Activated CD4-positive, alpha-beta T cell treated with anti-CD3 and anti-CD28 coated beads, Interleukin-2, amount 10 ng/mL, durations not matched to agents 7 days and 5 days (primary cell): ENCODE measurements at regions of chr22 and their contacts with region 1.

Region 1: GRCh38 chr22:50498322-50498890 is 9.1 kb downstream of the LMF2 start:
- DNase-seq: peak; percentile 78
- H3K4me3 Mint-ChIP-seq: no peak overlapping the region
- H3K27ac Mint-ChIP-seq: peak overlapping the region; percentile 17
- H3K4me1 Mint-ChIP-seq: peaks cover 11% of the 10 kb centered on the region
- H3K27me3 Mint-ChIP-seq: peaks cover 12% of the 10 kb centered on the region

Region 2: DNA sequence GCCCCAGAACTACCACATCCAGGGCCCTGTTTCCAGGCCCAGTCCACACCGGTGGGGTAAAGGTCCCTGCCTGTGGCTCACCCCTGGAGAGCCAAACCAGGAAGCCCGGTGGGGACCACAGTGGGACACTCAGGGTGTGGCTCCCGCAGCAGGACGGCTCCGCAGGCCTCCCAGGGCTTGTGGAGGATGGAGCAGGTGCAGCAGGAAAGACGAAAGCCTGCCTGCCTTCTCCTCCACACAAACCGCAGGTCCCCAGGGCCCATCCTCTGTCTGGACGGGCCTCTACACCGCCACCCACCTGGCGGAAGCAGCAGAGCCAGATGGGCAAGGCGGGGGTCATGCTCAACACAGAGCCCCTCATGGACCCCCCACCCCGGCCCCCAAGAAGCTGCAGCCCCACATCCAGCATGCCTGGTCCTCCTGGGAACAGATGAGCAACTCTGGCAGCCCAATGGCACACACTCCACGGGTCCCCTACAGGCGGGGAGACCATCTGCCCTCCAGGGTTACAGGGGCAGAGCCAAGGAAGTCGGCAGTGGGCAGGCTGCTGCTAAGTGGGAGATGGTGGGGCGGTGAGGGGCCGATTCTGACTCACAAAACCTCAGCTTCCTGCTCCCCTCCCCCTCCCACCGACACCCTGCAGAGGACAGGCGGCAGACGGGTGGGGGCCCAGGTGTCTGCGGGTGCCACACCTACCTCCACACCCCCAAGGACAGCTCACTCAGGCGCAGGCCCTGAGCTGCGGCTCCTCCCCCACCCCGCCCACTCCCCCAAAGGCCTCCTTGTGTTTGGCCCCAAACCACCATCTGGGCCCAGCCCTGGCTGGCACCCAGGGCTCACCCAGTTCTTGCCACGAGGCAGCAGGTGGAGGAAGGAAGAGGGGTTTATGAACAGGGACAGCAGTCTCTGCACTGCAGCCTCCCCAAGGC is 28.8 kb before region 1 on chr22:
- CTCF ChIA-PET with region 1: interaction called, 13 read pairs
- POLR2A ChIA-PET with region 1: no interaction called
- DNase-seq: peak; percentile 98
- H3K4me3 Mint-ChIP-seq: peak overlapping the region; percentile 67
- H3K27ac Mint-ChIP-seq: peak overlapping the region; percentile 97
- H3K4me1 Mint-ChIP-seq: peaks cover 71% of the 10 kb centered on the region
- H3K27me3 Mint-ChIP-seq: no peaks in the 10 kb centered on the region